ENCODE measurements at regions of chr2 and their contacts with region 1.

Region 1: GRCh38 chr2:30231212-30231995 is at the start of gene LBH:
- DNase-seq: peak; percentile 94
- H3K4me3 Mint-ChIP-seq: peak within 1 kb of the TSS; percentile 84
- H3K27ac Mint-ChIP-seq: peak within 1 kb of the TSS; percentile 89
- H3K4me1 Mint-ChIP-seq: peaks cover 58% of the 10 kb centered on the region
- H3K27me3 Mint-ChIP-seq: no peaks in the 10 kb centered on the region
- total RNA-seq, gene LBH: 176 and 184 TPM in 2 replicates

Region 2: GRCh38 chr2:30146438-30147147 is 84.8 kb before region 1 on chr2 and contains the start of gene YPEL5:
- intact Hi-C with region 1: loop called (anchors 1 kb)
- DNase-seq: peak; percentile 100
- H3K4me3 Mint-ChIP-seq: peak within 1 kb of the TSS; percentile 87
- H3K27ac Mint-ChIP-seq: peak within 1 kb of the TSS; percentile 97
- H3K4me1 Mint-ChIP-seq: peaks cover 32% of the 10 kb centered on the region
- H3K27me3 Mint-ChIP-seq: no peaks in the 10 kb centered on the region
- total RNA-seq, gene YPEL5: 16.8 and 19.6 TPM in 2 replicates

Region 3: GRCh38 chr2:30208452-30208851 is 23.0 kb before region 1 on chr2:
- intact Hi-C with region 1: loop called (anchors 1 kb)
- DNase-seq: peak; percentile 75
- H3K4me3 Mint-ChIP-seq: no peak overlapping the region
- H3K27ac Mint-ChIP-seq: no peak overlapping the region
- H3K4me1 Mint-ChIP-seq: peaks cover 13% of the 10 kb centered on the region
- H3K27me3 Mint-ChIP-seq: peaks cover 9% of the 10 kb centered on the region

Region 4: GRCh38 chr2:30252723-30253701 is 21.6 kb after region 1 on chr2:
- intact Hi-C with region 1: loop called (anchors 1 kb)
- DNase-seq: peak; percentile 83
- H3K4me3 Mint-ChIP-seq: peak overlapping the region; percentile 53
- H3K27ac Mint-ChIP-seq: peak overlapping the region; percentile 94
- H3K4me1 Mint-ChIP-seq: peaks cover 72% of the 10 kb centered on the region
- H3K27me3 Mint-ChIP-seq: no peaks in the 10 kb centered on the region

Region 5: DNA sequence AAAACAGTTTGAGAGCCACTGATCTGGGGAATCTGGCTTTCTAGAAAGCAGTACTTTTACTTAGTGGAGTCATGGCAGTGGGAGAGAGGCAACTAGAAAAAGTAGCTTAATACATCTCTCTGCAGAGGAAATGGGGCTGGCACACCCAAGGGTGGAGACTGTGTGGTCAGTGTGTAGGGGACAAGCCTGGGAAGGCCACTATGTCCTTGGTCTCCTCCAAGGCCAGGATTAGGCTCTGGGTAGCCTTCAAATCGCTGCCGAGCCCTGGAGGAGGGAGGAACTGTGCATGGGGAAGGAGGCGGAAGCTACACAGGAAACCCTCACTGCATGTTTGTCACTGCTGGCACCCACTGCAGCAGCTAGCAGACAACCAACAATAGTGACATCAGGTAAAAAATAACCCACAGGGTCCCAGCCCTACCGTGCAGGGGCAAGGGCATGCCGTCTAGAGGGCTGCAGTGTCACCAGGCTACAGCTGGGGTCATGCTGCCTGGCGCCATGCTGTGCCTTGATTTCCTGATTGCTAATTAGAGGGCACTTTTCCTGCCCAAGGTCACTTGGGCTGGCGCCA is 34.7 kb after region 1 on chr2:
- intact Hi-C with region 1: loop called (anchors 1 kb)
- DNase-seq: peak; percentile 86
- H3K4me3 Mint-ChIP-seq: peak overlapping the region; percentile 90
- H3K27ac Mint-ChIP-seq: peak overlapping the region; percentile 99
- H3K4me1 Mint-ChIP-seq: peaks cover 70% of the 10 kb centered on the region
- H3K27me3 Mint-ChIP-seq: no peaks in the 10 kb centered on the region

Region 6: DNA sequence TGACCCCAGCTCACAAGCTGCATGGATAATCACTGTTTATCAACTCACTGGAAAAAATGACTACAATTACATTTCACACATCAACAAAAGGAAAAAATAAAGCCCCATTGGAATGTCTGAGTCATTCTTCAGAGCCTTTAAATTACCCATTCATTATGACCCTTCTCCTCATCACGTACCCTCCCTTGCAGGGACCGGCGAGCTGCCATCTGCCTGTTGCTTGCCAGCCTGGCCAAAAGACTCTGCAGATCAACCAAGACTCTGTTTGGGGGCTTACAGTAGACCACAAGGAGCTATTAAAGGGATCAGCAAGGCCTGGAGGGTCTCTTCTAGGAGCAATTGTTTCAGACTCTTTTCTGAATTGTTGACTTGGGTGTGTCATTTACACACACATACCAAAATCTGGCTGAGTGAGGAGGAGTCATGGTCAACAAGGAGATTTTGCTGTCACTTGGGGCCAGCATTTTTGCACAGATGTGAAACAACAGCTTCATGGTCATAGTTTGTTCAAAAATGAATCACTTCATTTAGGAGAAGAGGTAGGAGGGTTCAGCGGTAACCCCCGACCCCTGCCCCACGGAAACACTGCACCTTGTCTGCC is 42.0 kb after region 1 on chr2:
- intact Hi-C with region 1: loop called (anchors 1 kb)
- DNase-seq: no peak
- H3K4me3 Mint-ChIP-seq: peak overlapping the region; percentile 71
- H3K27ac Mint-ChIP-seq: peak overlapping the region; percentile 99
- H3K4me1 Mint-ChIP-seq: peaks cover 72% of the 10 kb centered on the region
- H3K27me3 Mint-ChIP-seq: no peaks in the 10 kb centered on the region

Region 7: DNA sequence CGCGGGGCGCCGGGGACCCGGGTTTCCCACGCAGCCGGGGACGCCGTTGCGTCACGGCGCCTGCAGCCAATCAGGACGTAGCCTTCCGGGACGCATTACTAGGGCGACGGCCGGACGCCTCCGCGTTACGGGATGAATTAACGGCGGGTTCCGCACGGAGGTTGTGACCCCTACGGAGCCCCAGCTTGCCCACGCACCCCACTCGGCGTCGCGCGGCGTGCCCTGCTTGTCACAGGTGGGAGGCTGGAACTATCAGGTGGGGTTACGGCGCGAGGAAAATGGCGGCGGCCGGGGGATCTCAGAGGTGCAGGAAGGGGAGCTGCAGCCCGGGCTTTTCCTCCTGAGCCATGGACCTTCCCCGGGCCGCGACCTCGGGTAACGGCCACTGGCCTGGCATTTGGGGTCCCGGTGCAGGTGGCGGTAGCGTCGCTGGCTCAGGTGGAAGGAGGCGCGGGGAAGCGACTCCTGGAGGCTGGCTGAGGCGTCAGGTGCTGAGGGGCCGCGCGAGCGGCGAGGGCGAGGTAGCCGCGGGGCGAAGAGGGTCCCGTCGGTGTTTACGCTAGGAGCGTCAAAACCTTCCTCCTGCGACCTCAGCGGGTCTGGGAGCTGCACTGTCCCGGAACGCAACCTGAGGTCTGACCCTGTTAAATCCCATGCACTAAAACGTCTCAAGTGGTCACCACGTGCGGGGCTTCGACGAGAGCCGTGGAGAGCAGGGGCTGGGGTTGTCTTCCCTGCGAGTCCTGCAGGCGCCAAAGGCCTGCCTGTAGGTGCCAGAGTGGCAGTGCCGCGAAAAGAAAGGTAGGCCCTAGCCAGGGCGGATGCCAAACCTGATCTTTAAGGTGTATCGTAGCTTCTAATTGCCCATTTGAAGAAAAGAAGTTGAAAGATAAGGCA is 216.0 kb after region 1 on chr2 and contains the start of gene LCLAT1:
- intact Hi-C with region 1: loop called (anchors 2 kb)
- DNase-seq: peak; percentile 97
- H3K4me3 Mint-ChIP-seq: peak within 1 kb of the TSS; percentile 85
- H3K27ac Mint-ChIP-seq: peak within 1 kb of the TSS; percentile 97
- H3K4me1 Mint-ChIP-seq: peaks cover 26% of the 10 kb centered on the region
- H3K27me3 Mint-ChIP-seq: no peaks in the 10 kb centered on the region
- total RNA-seq, gene LCLAT1: 31.4 and 34.7 TPM in 2 replicates